ENCODE measurements at regions of chr1 and their contacts with region 1.

Region 1: GRCh38 chr1:227299241-227299627 is 19.1 kb downstream of the CDC42BPA start:
- DNase-seq: no peak
- H3K4me3 Mint-ChIP-seq: no peak overlapping the region
- H3K27ac Mint-ChIP-seq: peak overlapping the region; percentile 42
- H3K4me1 Mint-ChIP-seq: peaks cover 30% of the 10 kb centered on the region
- H3K27me3 Mint-ChIP-seq: no peaks in the 10 kb centered on the region
- CTCF ChIP-seq: no peak

Region 2: DNA sequence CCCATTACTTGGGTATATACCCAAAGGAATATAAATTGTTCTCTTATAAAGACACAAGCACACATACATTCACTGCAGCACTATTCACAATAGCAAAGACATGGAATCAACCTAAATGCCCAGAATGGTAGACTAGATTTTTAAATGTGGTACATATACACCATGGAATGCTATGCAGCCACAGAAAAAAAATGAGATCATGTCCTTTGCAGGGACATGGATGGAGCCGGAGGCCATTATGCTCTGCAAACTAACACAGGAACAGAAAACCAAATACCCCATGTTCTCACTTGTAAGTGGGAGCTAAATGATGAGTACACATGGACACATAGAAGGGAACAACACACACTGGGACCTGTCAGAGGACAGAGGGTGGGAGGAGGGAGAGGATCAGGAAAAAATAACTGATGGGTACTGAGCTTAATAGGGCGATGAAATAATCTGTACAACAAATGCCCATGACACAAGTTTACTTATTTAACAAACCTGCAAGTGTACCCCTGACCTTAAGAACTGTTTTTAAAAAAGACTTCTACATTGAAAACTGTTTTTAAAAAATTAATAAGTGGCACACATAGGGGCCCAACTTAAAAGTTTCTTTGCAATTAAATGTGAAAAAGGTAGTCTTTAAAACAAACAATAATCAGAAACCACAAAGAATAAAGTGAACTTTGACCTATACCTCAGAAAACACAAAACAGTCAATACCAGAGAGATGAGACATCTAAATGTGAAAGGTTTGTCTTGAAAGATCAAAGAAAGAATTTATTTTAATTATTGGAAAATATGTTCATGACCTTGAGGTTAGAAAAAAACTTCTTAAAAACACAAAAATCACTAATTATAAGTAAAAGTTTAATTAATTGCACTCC is 56.2 kb before region 1 on chr1:
- CTCF ChIA-PET with region 1: interaction called, 6 read pairs
- intact Hi-C with region 1: loop called (anchors 5 kb)
- DNase-seq: no peak
- H3K4me3 Mint-ChIP-seq: peak overlapping the region; percentile 48
- H3K27ac Mint-ChIP-seq: peak overlapping the region; percentile 64
- H3K4me1 Mint-ChIP-seq: peaks cover 25% of the 10 kb centered on the region
- H3K27me3 Mint-ChIP-seq: no peaks in the 10 kb centered on the region
- CTCF ChIP-seq: no peak

Measured in Calu3 (cell line).